Caco-2 (cell line): ENCODE measurements at regions of chr7 and their contacts with region 1.

Region 1: GRCh38 chr7:123748734-123749536 is at the start of gene WASL:
- DNase-seq: peak; percentile 93 to 96
- H3K4me3 ChIP-seq: peak within 1 kb of the TSS; percentile 100
- H3K4me3 Mint-ChIP-seq: peak within 1 kb of the TSS; percentile 100
- H3K27ac Mint-ChIP-seq: peak within 1 kb of the TSS; percentile 98
- H3K4me1 ChIP-seq: peaks cover 20% of the 10 kb centered on the region
- H3K4me1 Mint-ChIP-seq: peaks cover 30% of the 10 kb centered on the region
- H3K27me3 ChIP-seq: no peaks in the 10 kb centered on the region
- H3K27me3 Mint-ChIP-seq: no peaks in the 10 kb centered on the region
- CTCF ChIP-seq: no peak
- total RNA-seq, gene WASL: 42.3 TPM in 2 replicates

Region 2: GRCh38 chr7:123534383-123535260 is 214.3 kb before region 1 on chr7 and contains the start of gene IQUB:
- CTCF ChIA-PET with region 1: no interaction called
- POLR2A ChIA-PET with region 1: no interaction called
- intact Hi-C with region 1: loop called (anchors 2 kb)
- DNase-seq: peak; percentile 97 to 99
- H3K4me3 ChIP-seq: peak within 1 kb of the TSS; percentile 69
- H3K4me3 Mint-ChIP-seq: peak within 1 kb of the TSS; percentile 92
- H3K27ac Mint-ChIP-seq: peak within 1 kb of the TSS; percentile 81
- H3K4me1 ChIP-seq: no peaks in the 10 kb centered on the region
- H3K4me1 Mint-ChIP-seq: no peaks in the 10 kb centered on the region
- H3K27me3 ChIP-seq: no peaks in the 10 kb centered on the region
- H3K27me3 Mint-ChIP-seq: no peaks in the 10 kb centered on the region
- CTCF ChIP-seq: no peak
- total RNA-seq, gene IQUB: 0.35 and 0.39 TPM in 2 replicates

Region 3: GRCh38 chr7:123682690-123683089 is 66.2 kb before region 1 on chr7:
- CTCF ChIA-PET with region 1: interaction called, 4 read pairs
- POLR2A ChIA-PET with region 1: interaction called, 3 read pairs
- intact Hi-C with region 1: loop called (anchors 2 kb)
- DNase-seq: peak in 1 of 2 experiments; percentile 54
- H3K4me3 ChIP-seq: no peak overlapping the region
- H3K4me3 Mint-ChIP-seq: no peak overlapping the region
- H3K27ac Mint-ChIP-seq: no peak overlapping the region
- H3K4me1 ChIP-seq: peaks cover 19% of the 10 kb centered on the region
- H3K4me1 Mint-ChIP-seq: no peaks in the 10 kb centered on the region
- H3K27me3 ChIP-seq: no peaks in the 10 kb centered on the region
- H3K27me3 Mint-ChIP-seq: no peaks in the 10 kb centered on the region
- CTCF ChIP-seq: peak; percentile 47 to 61

Region 4: DNA sequence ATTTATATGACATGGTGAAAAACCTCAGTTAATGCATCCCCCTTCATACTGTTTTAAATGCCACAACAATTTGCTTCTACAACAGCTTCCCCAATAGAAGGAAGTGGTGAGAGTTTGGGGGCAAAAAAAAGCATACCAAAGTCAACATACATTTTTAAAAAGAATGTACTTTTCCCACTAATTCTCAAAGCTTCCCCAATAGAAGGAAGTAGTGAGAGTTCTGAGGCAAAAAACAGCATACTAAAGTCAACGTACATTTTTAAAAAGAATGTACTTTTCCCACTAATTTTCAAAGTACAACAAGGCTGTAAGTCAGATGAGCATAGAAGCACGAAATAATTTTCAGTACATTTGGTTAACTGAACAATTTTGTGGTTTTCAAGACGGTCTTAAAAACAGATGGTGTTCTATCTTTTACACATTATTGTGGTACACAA is 24.1 kb before region 1 on chr7:
- CTCF ChIA-PET with region 1: no interaction called
- POLR2A ChIA-PET with region 1: interaction called, 4 read pairs
- intact Hi-C with region 1: loop called (anchors 2 kb)
- DNase-seq: no peak
- H3K4me3 ChIP-seq: no peak overlapping the region
- H3K4me3 Mint-ChIP-seq: no peak overlapping the region
- H3K27ac Mint-ChIP-seq: no peak overlapping the region
- H3K4me1 ChIP-seq: peaks cover 34% of the 10 kb centered on the region
- H3K4me1 Mint-ChIP-seq: peaks cover 15% of the 10 kb centered on the region
- H3K27me3 ChIP-seq: no peaks in the 10 kb centered on the region
- H3K27me3 Mint-ChIP-seq: no peaks in the 10 kb centered on the region
- CTCF ChIP-seq: no peak

Region 5: DNA sequence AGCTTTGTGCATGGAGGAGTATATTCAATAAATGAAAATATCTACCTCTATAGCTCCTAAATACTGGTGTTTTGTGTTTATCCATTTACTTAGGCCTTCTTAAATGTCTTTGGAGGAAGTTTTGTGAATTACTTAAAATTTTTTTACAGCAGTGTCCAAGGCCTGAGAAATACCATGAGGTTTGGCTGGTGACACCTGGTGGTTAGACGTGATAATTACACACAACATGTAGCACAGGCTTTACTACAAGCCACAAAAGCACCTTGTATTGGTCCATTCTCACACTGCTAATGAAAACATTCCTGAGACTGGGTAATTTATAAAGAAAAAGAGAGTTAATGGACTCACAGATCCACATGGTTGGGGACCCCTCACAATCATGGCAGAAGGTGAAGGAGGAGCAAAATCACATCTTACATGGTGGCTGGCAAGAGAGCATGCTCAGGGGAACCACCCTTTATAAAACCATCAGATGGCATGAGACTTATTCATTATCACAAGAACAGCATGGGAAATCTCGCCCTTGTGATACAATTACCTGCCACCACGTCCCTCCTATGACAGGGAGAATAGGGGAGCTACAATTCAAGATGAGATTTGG is 116.7 kb after region 1 on chr7:
- CTCF ChIA-PET with region 1: no interaction called
- POLR2A ChIA-PET with region 1: no interaction called
- intact Hi-C with region 1: no loop called
- DNase-seq: peak; percentile 57 to 72
- H3K4me3 ChIP-seq: no peak overlapping the region
- H3K4me3 Mint-ChIP-seq: no peak overlapping the region
- H3K27ac Mint-ChIP-seq: no peak overlapping the region
- H3K4me1 ChIP-seq: 0 out of 2 replicates have a peak, but pooled peaks cover 3% of the 10 kb centered on the region
- H3K4me1 Mint-ChIP-seq: peaks cover 8% of the 10 kb centered on the region
- H3K27me3 ChIP-seq: no peaks in the 10 kb centered on the region
- H3K27me3 Mint-ChIP-seq: no peaks in the 10 kb centered on the region
- CTCF ChIP-seq: peak; percentile 53 to 74

Region 6: DNA sequence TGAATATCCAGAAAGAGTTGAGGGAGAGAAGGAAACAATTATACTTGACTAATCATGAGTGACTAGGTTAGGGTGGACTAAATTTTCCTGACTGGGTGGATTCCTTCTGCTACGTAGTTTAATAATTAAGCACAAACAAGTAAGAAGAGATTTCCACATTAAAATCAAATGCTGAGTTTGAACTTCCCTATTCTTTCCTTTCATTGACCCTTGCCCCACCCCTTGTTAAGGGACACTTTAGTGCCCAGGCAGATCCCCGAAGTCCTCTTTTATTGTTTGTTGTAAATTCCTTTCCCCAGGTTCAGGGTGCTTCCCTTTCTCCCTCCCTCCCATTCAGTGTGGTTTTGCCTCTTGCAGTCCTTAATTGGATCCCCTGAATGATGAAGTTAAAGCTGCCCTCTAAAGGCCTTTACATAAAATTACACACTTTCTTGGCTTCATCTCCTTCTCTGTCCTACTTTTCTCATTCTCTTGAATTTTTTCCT is 167.3 kb after region 1 on chr7:
- CTCF ChIA-PET with region 1: no interaction called
- POLR2A ChIA-PET with region 1: no interaction called
- intact Hi-C with region 1: loop called (anchors 5 kb)
- DNase-seq: peak; percentile 55 to 72
- H3K4me3 ChIP-seq: no peak overlapping the region
- H3K4me3 Mint-ChIP-seq: peak overlapping the region; percentile 20
- H3K27ac Mint-ChIP-seq: peak overlapping the region; percentile 68
- H3K4me1 ChIP-seq: peaks cover 11% of the 10 kb centered on the region
- H3K4me1 Mint-ChIP-seq: peaks cover 14% of the 10 kb centered on the region
- H3K27me3 ChIP-seq: no peaks in the 10 kb centered on the region
- H3K27me3 Mint-ChIP-seq: no peaks in the 10 kb centered on the region
- CTCF ChIP-seq: peak; percentile 50 to 59